Heart left ventricle (tissue), 16 donors: ENCODE measurements at regions of chr9 and their contacts with region 1.

Region 1: GRCh38 chr9:23803216-23803615 is 22.8 kb downstream of the ELAVL2 start:
- DNase-seq: no peak
- ATAC-seq: no peak
- H3K4me3 ChIP-seq: no peak overlapping the region
- H3K27ac ChIP-seq: no peak overlapping the region
- H3K4me1 ChIP-seq: no peaks in the 10 kb centered on the region
- H3K27me3 ChIP-seq: no peaks in the 10 kb centered on the region
- CTCF ChIP-seq: no peak
- POLR2A ChIP-seq: no peak

Region 2: GRCh38 chr9:23702311-23702922 is 100.8 kb before region 1 on chr9:
- intact Hi-C with region 1: loop called in 1 of 10 experiments (anchors 10 kb)
- DNase-seq: no peak
- ATAC-seq: no peak
- H3K4me3 ChIP-seq: no peak overlapping the region
- H3K27ac ChIP-seq: no peak overlapping the region
- H3K4me1 ChIP-seq: no peaks in the 10 kb centered on the region
- H3K27me3 ChIP-seq: no peaks in the 10 kb centered on the region
- CTCF ChIP-seq: no peak
- POLR2A ChIP-seq: no peak

Region 3: GRCh38 chr9:23784962-23785361 is 18.3 kb before region 1 on chr9:
- intact Hi-C with region 1: loop called in 1 of 10 experiments (anchors 2 kb)
- DNase-seq: no peak
- ATAC-seq: no peak
- H3K4me3 ChIP-seq: no peak overlapping the region
- H3K27ac ChIP-seq: no peak overlapping the region
- H3K4me1 ChIP-seq: no peaks in the 10 kb centered on the region
- H3K27me3 ChIP-seq: no peaks in the 10 kb centered on the region
- CTCF ChIP-seq: no peak
- POLR2A ChIP-seq: no peak

Region 4: GRCh38 chr9:23842565-23843129 is 39.4 kb after region 1 on chr9:
- intact Hi-C with region 1: no loop called
- DNase-seq: no peak
- ATAC-seq: no peak
- H3K4me3 ChIP-seq: no peak overlapping the region
- H3K27ac ChIP-seq: no peak overlapping the region
- H3K4me1 ChIP-seq: no peaks in the 10 kb centered on the region
- H3K27me3 ChIP-seq: peaks cover 0 to 17% (median 3%) of the 10 kb centered on the region in 9 donors
- CTCF ChIP-seq: no peak
- POLR2A ChIP-seq: no peak